ENCODE measurements at regions of chr20 and their contacts with region 1.

Region 1: GRCh38 chr20:6104493-6105188 is 18.2 kb downstream of the FERMT1 start:
- DNase-seq: no peak
- H3K4me3 Mint-ChIP-seq: no peak overlapping the region
- H3K27ac Mint-ChIP-seq: peak overlapping the region; percentile 63
- H3K4me1 Mint-ChIP-seq: peaks cover 4% of the 10 kb centered on the region
- H3K27me3 Mint-ChIP-seq: no peaks in the 10 kb centered on the region
- CTCF ChIP-seq: no peak

Region 2: DNA sequence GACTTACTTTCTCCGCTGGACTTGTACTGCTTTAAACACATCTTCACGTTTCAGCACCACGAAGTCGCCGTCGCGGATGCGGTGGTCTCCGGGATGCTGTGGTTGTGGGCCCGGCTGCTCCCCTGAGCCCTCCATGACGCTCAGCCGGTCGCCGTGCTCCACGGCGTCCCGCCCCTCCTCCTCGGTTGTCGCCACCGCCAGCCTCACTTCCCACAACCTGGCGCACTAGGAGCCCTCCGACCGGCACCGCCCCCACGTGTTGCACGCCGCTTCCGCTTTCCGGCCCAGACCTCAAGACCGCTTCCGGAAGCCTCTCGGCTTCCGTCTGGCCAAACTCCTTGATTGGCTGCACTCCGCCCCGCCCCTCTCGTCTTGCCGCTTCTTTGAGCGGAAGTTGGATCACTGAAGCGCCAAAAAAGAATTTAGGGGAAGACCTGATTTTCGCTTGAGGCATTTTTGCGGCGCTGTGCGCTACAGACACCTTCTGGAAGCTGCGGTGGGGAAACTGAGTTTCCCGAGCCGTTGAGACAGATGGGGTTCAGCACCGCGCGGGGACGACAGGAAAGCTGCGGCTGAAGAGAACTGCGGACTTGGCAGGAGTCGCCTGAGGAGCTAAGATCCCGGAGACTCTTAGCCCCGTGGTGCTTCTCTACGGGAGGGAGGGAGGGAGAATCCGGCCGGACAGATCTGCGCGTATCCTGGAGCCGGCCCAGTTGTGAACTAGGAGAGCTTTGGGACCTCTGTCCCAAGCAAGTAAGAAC is 154.2 kb before region 1 on chr20 and contains the starts of genes MCM8 and TRMT6:
- CTCF ChIA-PET with region 1: no interaction called
- POLR2A ChIA-PET with region 1: no interaction called
- intact Hi-C with region 1: no loop called
- DNase-seq: peak; percentile 96
- H3K4me3 Mint-ChIP-seq: peak within 1 kb of the TSS; percentile 99
- H3K27ac Mint-ChIP-seq: peak within 1 kb of the TSS; percentile 59
- H3K4me1 Mint-ChIP-seq: peaks cover 22% of the 10 kb centered on the region
- H3K27me3 Mint-ChIP-seq: no peaks in the 10 kb centered on the region
- CTCF ChIP-seq: no peak
- total RNA-seq, gene MCM8: 8.0 and 12.4 TPM in 2 replicates
- total RNA-seq, gene TRMT6: 31.0 and 44.9 TPM in 2 replicates

Region 3: DNA sequence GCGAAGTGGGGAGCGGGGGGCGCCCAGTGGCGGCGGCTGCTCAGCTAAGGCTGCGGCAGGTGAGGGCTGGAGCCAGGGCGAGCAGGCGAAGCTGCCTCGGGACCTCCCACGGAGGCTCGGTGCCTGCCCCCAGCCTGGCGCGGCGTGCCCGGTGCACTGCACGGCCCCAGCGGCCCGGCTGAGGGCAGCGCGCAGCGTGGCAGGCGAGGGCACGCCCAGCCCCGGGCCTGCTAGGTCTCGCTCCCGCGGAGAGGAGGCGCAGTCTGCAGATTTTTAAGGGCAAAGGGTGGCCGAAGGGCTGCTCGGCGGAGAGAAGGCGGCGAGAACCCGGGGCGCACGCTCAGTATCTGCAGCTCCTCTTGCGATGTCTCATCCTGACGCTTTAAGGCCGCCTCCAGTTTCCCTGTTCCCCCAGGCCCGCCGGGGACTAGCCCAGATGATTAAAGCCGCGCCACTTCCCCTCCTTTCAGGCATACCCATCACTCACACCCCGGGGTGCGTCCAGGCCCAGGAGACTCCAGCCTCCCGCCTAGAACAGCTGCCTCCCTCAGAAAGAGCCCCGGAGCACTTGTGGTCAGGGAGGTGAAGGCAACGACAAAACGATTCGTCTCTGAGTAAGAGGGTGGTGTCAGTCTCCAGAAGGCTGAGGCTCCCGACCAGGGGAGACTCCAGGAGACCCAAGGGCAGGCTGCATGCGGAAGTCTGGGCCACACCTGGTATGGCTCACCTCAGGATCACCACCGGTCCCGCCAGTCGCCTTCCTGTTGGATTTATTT is 18.4 kb after region 1 on chr20 and contains the start of gene FERMT1:
- CTCF ChIA-PET with region 1: interaction called, 12 read pairs
- POLR2A ChIA-PET with region 1: interaction called, 75 read pairs
- intact Hi-C with region 1: no loop called
- DNase-seq: peak; percentile 84
- H3K4me3 Mint-ChIP-seq: peak within 1 kb of the TSS; percentile 83
- H3K27ac Mint-ChIP-seq: peak within 1 kb of the TSS; percentile 95
- H3K4me1 Mint-ChIP-seq: peaks cover 12% of the 10 kb centered on the region
- H3K27me3 Mint-ChIP-seq: no peaks in the 10 kb centered on the region
- CTCF ChIP-seq: peak; percentile 22
- total RNA-seq, gene FERMT1: 25.5 and 43.1 TPM in 2 replicates

Region 4: GRCh38 chr20:6200092-6200491 is 95.5 kb after region 1 on chr20:
- CTCF ChIA-PET with region 1: no interaction called
- POLR2A ChIA-PET with region 1: no interaction called
- intact Hi-C with region 1: no loop called
- DNase-seq: no peak
- H3K4me3 Mint-ChIP-seq: no peak overlapping the region
- H3K27ac Mint-ChIP-seq: no peak overlapping the region
- H3K4me1 Mint-ChIP-seq: no peaks in the 10 kb centered on the region
- H3K27me3 Mint-ChIP-seq: no peaks in the 10 kb centered on the region
- CTCF ChIP-seq: no peak

Region 5: DNA sequence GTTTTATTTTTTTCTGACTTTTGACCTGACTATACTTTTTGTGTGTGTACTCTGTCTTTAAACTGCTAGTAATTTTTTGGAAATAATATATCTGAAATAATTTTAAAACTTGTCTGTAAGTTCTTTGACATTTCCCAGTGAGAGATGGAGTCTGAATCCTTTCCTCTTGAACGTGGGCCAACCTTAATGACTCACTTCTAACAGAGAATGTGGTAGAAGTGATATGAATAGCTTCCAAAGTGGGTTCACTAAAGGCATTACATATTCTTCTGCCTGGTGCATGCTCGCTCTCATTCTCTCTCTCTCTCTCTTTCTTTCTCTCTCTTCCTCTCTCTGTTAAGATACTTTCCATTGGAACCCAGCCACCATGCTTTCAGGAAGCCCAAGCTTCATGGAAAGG is 126.9 kb after region 1 on chr20:
- CTCF ChIA-PET with region 1: no interaction called
- POLR2A ChIA-PET with region 1: no interaction called
- intact Hi-C with region 1: no loop called
- DNase-seq: peak; percentile 61
- H3K4me3 Mint-ChIP-seq: no peak overlapping the region
- H3K27ac Mint-ChIP-seq: no peak overlapping the region
- H3K4me1 Mint-ChIP-seq: peaks cover 6% of the 10 kb centered on the region
- H3K27me3 Mint-ChIP-seq: no peaks in the 10 kb centered on the region
- CTCF ChIP-seq: no peak

Region 6: GRCh38 chr20:6663104-6663503 is 558.5 kb after region 1 on chr20:
- CTCF ChIA-PET with region 1: no interaction called
- POLR2A ChIA-PET with region 1: no interaction called
- intact Hi-C with region 1: no loop called
- DNase-seq: peak; percentile 13
- H3K4me3 Mint-ChIP-seq: no peak overlapping the region
- H3K27ac Mint-ChIP-seq: no peak overlapping the region
- H3K4me1 Mint-ChIP-seq: peaks cover 28% of the 10 kb centered on the region
- H3K27me3 Mint-ChIP-seq: no peaks in the 10 kb centered on the region
- CTCF ChIP-seq: no peak